ENCODE measurements at regions of chr11 and their contacts with region 1.

Region 1: GRCh38 chr11:77418155-77418970 is 55.5 kb downstream of the PAK1 start:
- DNase-seq: no peak
- ATAC-seq: peak; percentile 93
- H3K4me3 ChIP-seq: peak overlapping the region; percentile 31; the same call in 1 of the 2 replicates
- H3K27ac ChIP-seq: peak overlapping the region; percentile 67
- H3K4me1 ChIP-seq: peaks cover 8% of the 10 kb centered on the region
- H3K27me3 ChIP-seq: no peaks in the 10 kb centered on the region
- CTCF ChIP-seq: no peak
- EP300 ChIP-seq: no peak
- POLR2A ChIP-seq: no peak
- RAD21 ChIP-seq: no peak

Region 2: GRCh38 chr11:77442394-77443053 is 24.2 kb after region 1 on chr11:
- CTCF ChIA-PET with region 1: interaction called, 7 read pairs
- POLR2A ChIA-PET with region 1: interaction called, 4 read pairs
- RAD21 ChIA-PET with region 1: interaction called, 36 read pairs
- SMC1A ChIA-PET with region 1: interaction called, 20 read pairs
- in situ Hi-C with region 1: no loop called
- intact Hi-C with region 1: no loop called
- DNase-seq: no peak
- ATAC-seq: peak; percentile 75
- H3K4me3 ChIP-seq: peak overlapping the region; percentile 17; the same call in 1 of the 2 replicates
- H3K27ac ChIP-seq: peak overlapping the region; percentile 82
- H3K4me1 ChIP-seq: peaks cover 72% of the 10 kb centered on the region
- H3K27me3 ChIP-seq: no peaks in the 10 kb centered on the region
- CTCF ChIP-seq: no peak
- EP300 ChIP-seq: no peak
- POLR2A ChIP-seq: no peak
- RAD21 ChIP-seq: no peak

Region 3: DNA sequence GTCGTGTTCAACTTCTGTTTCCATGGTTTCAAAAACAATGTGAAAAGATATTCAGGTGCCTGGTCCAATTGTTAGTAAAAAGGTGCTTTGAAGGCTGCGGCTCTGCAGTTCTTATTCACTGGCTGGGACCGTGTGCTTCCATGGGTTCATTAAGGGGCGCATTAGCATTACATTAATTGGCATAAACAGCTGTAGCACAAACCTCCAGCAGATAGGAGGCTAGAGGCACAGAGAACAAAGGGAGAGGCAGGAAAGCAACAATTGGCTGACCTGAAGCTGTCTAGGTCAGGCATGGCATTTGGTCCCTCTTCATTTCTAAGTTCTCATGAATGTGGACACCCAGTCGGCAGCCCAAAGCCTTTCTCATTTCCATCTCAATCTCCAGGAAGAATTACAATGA is 39.0 kb after region 1 on chr11:
- CTCF ChIA-PET with region 1: no interaction called
- POLR2A ChIA-PET with region 1: interaction called, 3 read pairs
- RAD21 ChIA-PET with region 1: no interaction called
- SMC1A ChIA-PET with region 1: interaction called, 5 read pairs
- in situ Hi-C with region 1: no loop called
- intact Hi-C with region 1: loop called (anchors 2 kb)
- DNase-seq: no peak
- ATAC-seq: peak; percentile 52
- H3K4me3 ChIP-seq: peak overlapping the region; percentile 55; the same call in 1 of the 2 replicates
- H3K27ac ChIP-seq: peak overlapping the region; percentile 57
- H3K4me1 ChIP-seq: peaks cover 47% of the 10 kb centered on the region
- H3K27me3 ChIP-seq: no peaks in the 10 kb centered on the region
- CTCF ChIP-seq: no peak
- EP300 ChIP-seq: no peak
- POLR2A ChIP-seq: no peak
- RAD21 ChIP-seq: no peak

Region 4: GRCh38 chr11:77734890-77735289 is 316.5 kb after region 1 on chr11:
- CTCF ChIA-PET with region 1: no interaction called
- POLR2A ChIA-PET with region 1: no interaction called
- RAD21 ChIA-PET with region 1: no interaction called
- SMC1A ChIA-PET with region 1: no interaction called
- in situ Hi-C with region 1: no loop called
- intact Hi-C with region 1: no loop called
- DNase-seq: no peak
- ATAC-seq: no peak
- H3K4me3 ChIP-seq: no peak overlapping the region
- H3K27ac ChIP-seq: no peak overlapping the region
- H3K4me1 ChIP-seq: no peaks in the 10 kb centered on the region
- H3K27me3 ChIP-seq: no peaks in the 10 kb centered on the region
- CTCF ChIP-seq: no peak
- EP300 ChIP-seq: no peak
- POLR2A ChIP-seq: no peak
- RAD21 ChIP-seq: no peak

Measured in GM12878 (cell line).